IMR-90 (cell line): ENCODE measurements at regions of chr5 and their contacts with region 1.

Region 1: GRCh38 chr5:95530416-95530815 is 24.4 kb downstream of the SKIC3 start:
- DNase-seq: peak; percentile 95
- ATAC-seq: peak; percentile 88
- H3K4me3 ChIP-seq: no peak overlapping the region
- H3K27ac ChIP-seq: no peak overlapping the region
- H3K4me1 ChIP-seq: no peaks in the 10 kb centered on the region; the same call in 1 of the 2 replicates
- H3K27me3 ChIP-seq: no peaks in the 10 kb centered on the region
- CTCF ChIP-seq: no peak
- POLR2A ChIP-seq: no peak
- RAD21 ChIP-seq: no peak

Region 2: DNA sequence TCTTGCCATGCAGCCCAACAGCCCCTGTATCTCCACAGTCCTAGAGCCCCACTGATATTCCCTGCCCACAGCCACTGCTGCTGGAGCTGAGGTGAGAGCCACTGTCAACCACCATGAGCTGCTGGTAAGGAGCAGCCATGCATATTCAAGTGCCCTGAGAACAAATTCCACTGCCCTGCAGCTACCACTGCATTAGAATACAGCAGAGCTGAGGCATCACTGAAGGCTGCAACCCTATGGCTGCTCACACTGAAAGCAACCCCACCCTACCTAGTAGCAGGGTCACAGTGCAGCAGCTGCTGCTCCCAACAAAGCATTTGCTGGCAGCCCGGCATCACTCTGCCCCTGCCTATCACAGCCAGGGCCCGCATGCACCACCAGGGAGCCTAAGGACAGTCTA is 44.2 kb before region 1 on chr5:
- CTCF ChIA-PET with region 1: no interaction called
- POLR2A ChIA-PET with region 1: no interaction called
- dilution Hi-C with region 1: no loop called
- in situ Hi-C with region 1: no loop called
- intact Hi-C with region 1: loop called (anchors 5 kb)
- DNase-seq: no peak
- ATAC-seq: no peak
- H3K4me3 ChIP-seq: no peak overlapping the region
- H3K27ac ChIP-seq: no peak overlapping the region
- H3K4me1 ChIP-seq: no peaks in the 10 kb centered on the region
- H3K27me3 ChIP-seq: no peaks in the 10 kb centered on the region
- CTCF ChIP-seq: no peak
- POLR2A ChIP-seq: no peak
- RAD21 ChIP-seq: no peak

Region 3: GRCh38 chr5:95543017-95543705 is 12.7 kb after region 1 on chr5:
- CTCF ChIA-PET with region 1: interaction called, 8 read pairs
- POLR2A ChIA-PET with region 1: interaction called, 12 read pairs
- dilution Hi-C with region 1: no loop called
- in situ Hi-C with region 1: no loop called
- intact Hi-C with region 1: no loop called
- DNase-seq: peak; percentile 32
- ATAC-seq: peak; percentile 83
- H3K4me3 ChIP-seq: no peak overlapping the region
- H3K27ac ChIP-seq: no peak overlapping the region
- H3K4me1 ChIP-seq: peaks cover 2% of the 10 kb centered on the region; the same call in 1 of the 2 replicates
- H3K27me3 ChIP-seq: no peaks in the 10 kb centered on the region
- CTCF ChIP-seq: no peak
- POLR2A ChIP-seq: no peak
- RAD21 ChIP-seq: no peak